ENCODE measurements at regions of chr14 and their contacts with region 1.

Region 1: GRCh38 chr14:41137741-41138140 is 468.9 kb upstream of the LRFN5 start:
- DNase-seq: no peak
- ATAC-seq: no peak
- H3K4me3 ChIP-seq: no peak overlapping the region
- H3K27ac ChIP-seq: no peak overlapping the region
- H3K4me1 ChIP-seq: no peaks in the 10 kb centered on the region
- H3K27me3 ChIP-seq: no peaks in the 10 kb centered on the region
- CTCF ChIP-seq: no peak

Region 2: DNA sequence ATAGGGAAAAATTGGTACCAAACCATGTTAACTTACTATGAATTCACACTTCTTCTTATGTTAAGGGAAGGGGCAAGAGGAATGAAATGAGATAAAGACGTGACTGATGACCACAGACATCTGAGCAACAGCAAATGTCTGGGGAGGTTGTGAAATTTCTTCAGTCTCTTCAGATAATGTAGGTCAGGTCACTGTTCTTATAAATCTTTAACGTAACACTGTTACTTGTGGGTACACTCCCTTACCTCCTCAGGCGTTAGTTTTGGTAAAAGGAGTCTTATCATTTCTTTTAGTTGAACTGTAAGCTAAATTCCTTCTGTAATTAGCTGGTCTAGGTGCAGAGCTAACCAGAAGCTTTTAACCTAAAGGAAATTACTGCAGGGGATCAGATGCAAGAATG is 64.0 kb after region 1 on chr14:
- intact Hi-C with region 1: loop called in 1 of 2 experiments (anchors 5 kb)
- DNase-seq: no peak
- ATAC-seq: no peak
- H3K4me3 ChIP-seq: no peak overlapping the region
- H3K27ac ChIP-seq: no peak overlapping the region
- H3K4me1 ChIP-seq: no peaks in the 10 kb centered on the region
- H3K27me3 ChIP-seq: no peaks in the 10 kb centered on the region
- CTCF ChIP-seq: no peak